ENCODE measurements at regions of chr11 and their contacts with region 1.

Region 1: DNA sequence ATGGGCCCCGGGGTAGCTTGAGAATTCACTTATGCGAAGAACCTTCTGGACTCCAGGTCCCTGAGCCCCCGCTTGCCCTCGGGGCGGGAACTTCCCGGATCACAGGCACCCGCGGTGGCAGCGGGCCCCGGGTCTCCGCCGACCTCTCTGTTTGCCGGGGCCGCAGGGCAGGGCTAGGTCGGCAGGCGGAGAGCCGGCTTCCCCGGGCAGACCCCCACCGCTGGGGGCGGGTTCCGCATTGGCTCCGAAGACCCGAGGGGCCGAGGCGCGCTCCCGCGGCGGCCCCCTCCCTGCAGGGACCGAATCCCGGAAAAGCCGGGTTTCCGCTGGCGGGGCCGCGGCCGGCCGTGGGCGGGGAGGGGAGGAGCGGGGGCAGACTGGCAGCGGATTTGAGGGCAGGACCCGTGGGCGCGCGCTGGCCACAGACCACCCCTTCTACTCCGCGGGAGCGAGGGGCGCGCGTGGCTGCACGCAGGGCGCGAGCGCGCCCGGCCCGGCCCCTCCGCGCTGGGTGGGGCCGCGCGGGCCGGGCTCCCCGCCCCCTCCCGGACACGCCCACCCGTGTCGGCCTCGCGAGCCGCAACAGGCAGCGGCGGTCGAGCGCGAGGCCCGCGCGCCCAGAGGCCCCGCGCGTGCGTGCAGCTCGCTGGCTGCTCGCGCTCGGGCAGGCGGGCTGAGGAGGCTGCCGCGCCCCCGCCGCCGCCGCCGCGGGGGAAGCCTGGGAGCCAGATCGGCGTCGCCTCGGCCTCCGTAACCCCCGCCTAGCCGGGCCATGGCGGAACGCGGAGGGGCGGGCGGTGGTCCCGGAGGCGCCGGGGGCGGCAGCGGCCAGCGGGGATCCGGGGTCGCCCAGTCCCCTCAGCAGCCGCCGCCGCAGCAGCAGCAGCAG is at the start of gene PACS1:
- DNase-seq: peak; percentile 89 to 94 (median 90)
- ATAC-seq: peak; percentile 25 to 87 (median 73)
- H3K4me3 ChIP-seq: peak within 1 kb of the TSS; percentile 81 to 99 (median 93)
- H3K27ac ChIP-seq: peak within 1 kb of the TSS; percentile 93 to 100 (median 99)
- H3K4me1 ChIP-seq: peaks cover 0 to 61% (median 34%) of the 10 kb centered on the region in 12 donors
- H3K27me3 ChIP-seq: no peaks in the 10 kb centered on the region
- CTCF ChIP-seq: peak in 2 of 12 donors; percentile 0 to 8
- POLR2A ChIP-seq: peak in 1 of 2 donors; percentile 53
- total RNA-seq, gene PACS1: 39.2 to 151 (median 90.4) TPM

Region 2: GRCh38 chr11:66051766-66052663 is 17.9 kb before region 1 on chr11 and contains the start of gene SF3B2:
- intact Hi-C with region 1: loop called in 2 of 10 experiments (anchors 1 to 2 kb)
- DNase-seq: peak; percentile 97 to 99 (median 99)
- ATAC-seq: peak; percentile 96 to 99 (median 98)
- H3K4me3 ChIP-seq: peak within 1 kb of the TSS; percentile 51 to 100 (median 87)
- H3K27ac ChIP-seq: peak within 1 kb of the TSS; percentile 80 to 96 (median 92)
- H3K4me1 ChIP-seq: peaks cover 0 to 41% (median 24%) of the 10 kb centered on the region in 12 donors
- H3K27me3 ChIP-seq: peaks cover 0 to 20% (median 5%) of the 10 kb centered on the region in 9 donors
- CTCF ChIP-seq: peak in 3 of 12 donors; percentile 17 to 26 (median 20)
- POLR2A ChIP-seq: peak in 1 of 2 donors; percentile 62
- total RNA-seq, gene SF3B2: 69.8 to 92.9 (median 79.6) TPM

Region 3: GRCh38 chr11:66119348-66120133 is 49.6 kb after region 1 on chr11:
- intact Hi-C with region 1: loop called in 5 of 10 experiments (anchors 5 to 10 kb)
- DNase-seq: peak in 1 of 5 donors; percentile 45
- ATAC-seq: peak; percentile 67 to 86 (median 79)
- H3K4me3 ChIP-seq: no peak overlapping the region
- H3K27ac ChIP-seq: peak overlapping the region; percentile 37 to 84 (median 66)
- H3K4me1 ChIP-seq: peaks cover 0 to 66% (median 39%) of the 10 kb centered on the region in 12 donors
- H3K27me3 ChIP-seq: no peaks in the 10 kb centered on the region
- CTCF ChIP-seq: no peak
- POLR2A ChIP-seq: no peak

Region 4: DNA sequence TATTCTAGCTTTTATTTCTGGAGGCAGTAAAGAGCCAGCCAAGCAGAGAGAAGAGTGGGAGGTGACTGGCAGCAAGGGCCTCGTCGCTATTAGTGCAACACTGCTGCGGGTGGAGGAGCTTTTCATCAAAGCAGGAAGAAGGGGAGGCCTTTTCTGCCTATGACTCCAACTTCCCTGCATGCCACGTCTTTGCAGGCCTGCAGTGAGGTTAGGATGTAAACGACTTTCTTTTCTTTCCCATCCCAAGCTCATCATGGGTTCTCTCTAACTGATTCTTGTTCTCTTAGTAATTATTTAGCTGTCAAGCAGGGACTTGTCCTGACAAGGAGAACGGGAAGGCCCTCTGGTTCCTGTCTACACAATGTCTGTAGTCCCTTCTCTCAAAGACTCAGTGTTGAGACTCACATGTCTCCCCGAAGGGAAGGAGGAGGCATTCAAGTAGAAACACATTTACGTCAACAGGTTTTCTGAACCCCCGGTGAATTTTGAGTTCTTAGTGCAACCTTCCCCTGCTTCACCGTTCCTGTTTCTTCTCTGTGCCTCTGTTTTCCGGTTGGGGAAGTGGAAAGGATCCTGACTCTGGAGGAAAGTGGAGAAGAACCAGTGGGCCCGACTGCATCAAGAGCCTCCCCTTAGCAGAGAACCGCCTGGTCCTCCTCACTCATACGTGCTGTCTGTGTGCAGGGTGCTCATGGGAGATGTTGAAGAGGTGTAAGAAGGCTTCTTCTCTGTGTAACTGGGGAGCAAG is 57.0 kb after region 1 on chr11:
- intact Hi-C with region 1: loop called in 7 of 10 experiments (anchors 5 to 10 kb)
- DNase-seq: peak; percentile 65 to 75 (median 70)
- ATAC-seq: peak; percentile 79 to 93 (median 90)
- H3K4me3 ChIP-seq: peak overlapping the region in 4 of 12 donors; percentile 22 to 31 (median 28)
- H3K27ac ChIP-seq: peak overlapping the region; percentile 41 to 89 (median 68)
- H3K4me1 ChIP-seq: peaks cover 0 to 41% (median 23%) of the 10 kb centered on the region in 12 donors
- H3K27me3 ChIP-seq: no peaks in the 10 kb centered on the region
- CTCF ChIP-seq: peak in 3 of 12 donors; percentile 7 to 18 (median 18)
- POLR2A ChIP-seq: no peak

Region 5: DNA sequence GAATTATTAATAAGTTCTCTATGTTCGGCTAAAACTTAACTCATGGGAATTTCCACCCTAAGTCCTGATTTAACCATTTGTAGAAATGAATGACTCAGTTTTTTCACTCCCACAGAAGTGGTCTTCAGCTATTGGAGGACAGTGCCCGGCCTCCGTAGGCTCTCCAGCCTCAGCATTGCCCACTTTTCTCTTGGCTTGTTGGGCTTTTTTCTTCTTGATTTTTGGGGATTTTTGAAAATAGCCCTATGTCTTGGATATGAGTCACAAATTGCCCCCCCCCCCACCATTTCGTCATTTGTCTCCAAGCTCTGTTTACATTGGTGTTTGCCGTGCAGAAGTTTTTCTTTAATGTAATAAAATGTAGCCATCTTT is 66.8 kb after region 1 on chr11:
- intact Hi-C with region 1: loop called in 4 of 10 experiments (anchors 5 to 10 kb)
- DNase-seq: no peak
- ATAC-seq: no peak
- H3K4me3 ChIP-seq: no peak overlapping the region
- H3K27ac ChIP-seq: no peak overlapping the region
- H3K4me1 ChIP-seq: peaks cover 0 to 21% (median 5%) of the 10 kb centered on the region in 12 donors
- H3K27me3 ChIP-seq: no peaks in the 10 kb centered on the region
- CTCF ChIP-seq: no peak
- POLR2A ChIP-seq: no peak